Heart left ventricle (tissue), 16 donors: ENCODE measurements at regions of chrX and their contacts with region 1.

Region 1: GRCh38 chrX:70096052-70096451 is 33.8 kb downstream of the OTUD6A start:
- DNase-seq: no peak
- ATAC-seq: no peak
- H3K4me3 ChIP-seq: no peak overlapping the region
- H3K27ac ChIP-seq: no peak overlapping the region
- H3K4me1 ChIP-seq: no peaks in the 10 kb centered on the region
- H3K27me3 ChIP-seq: peaks cover 0 to 4% (median 0%) of the 10 kb centered on the region in 9 donors
- CTCF ChIP-seq: peak in 5 of 12 donors; percentile 10 to 37 (median 13)
- POLR2A ChIP-seq: no peak

Region 2: GRCh38 chrX:68822641-68823410 is 1273.2 kb before region 1 on chrX:
- intact Hi-C with region 1: loop called in 1 of 10 experiments (anchors 5 kb)
- DNase-seq: peak in 4 of 5 donors; percentile 40 to 62 (median 54)
- ATAC-seq: peak; percentile 49 to 90 (median 86)
- H3K4me3 ChIP-seq: no peak overlapping the region
- H3K27ac ChIP-seq: no peak overlapping the region
- H3K4me1 ChIP-seq: peaks cover 0 to 5% (median 0%) of the 10 kb centered on the region in 12 donors
- H3K27me3 ChIP-seq: peaks cover 0 to 25% (median 0%) of the 10 kb centered on the region in 9 donors
- CTCF ChIP-seq: peak; percentile 34 to 70 (median 64)
- POLR2A ChIP-seq: no peak

Region 3: DNA sequence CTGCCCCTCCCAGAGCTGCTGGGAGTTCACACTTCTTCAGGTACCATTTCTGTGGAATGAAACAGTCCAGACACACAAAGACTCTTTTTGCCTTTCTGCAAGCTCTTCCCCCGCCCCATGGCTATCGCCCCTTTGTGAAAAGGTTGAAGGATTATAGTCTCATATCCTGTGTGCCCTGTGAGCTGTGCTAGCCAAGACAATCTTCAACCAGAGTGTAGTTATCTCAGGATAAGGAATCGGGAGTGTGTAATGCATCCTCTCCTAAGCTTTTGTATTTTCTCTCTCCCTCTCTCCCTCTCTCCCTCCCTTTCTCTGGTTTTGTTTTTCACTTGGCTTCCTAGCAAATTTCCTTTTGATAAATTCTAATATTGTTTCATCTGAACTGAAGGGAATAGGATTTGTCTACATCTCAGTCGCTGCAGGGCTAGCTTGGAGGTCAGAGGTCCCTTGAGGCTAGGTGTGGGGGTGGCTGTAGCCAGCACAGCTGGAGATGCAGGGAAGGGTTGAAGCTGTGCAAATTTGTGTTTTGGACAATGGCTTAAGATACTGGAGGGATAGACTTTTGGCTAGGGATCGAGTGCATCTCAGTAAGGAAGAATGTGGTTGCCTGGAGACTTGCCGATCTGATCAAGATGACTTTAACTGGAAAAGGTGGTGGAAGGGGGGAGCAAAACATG is 666.6 kb before region 1 on chrX:
- intact Hi-C with region 1: loop called in 5 of 10 experiments (anchors 5 to 10 kb)
- DNase-seq: peak in 3 of 5 donors; percentile 29 to 37 (median 31)
- ATAC-seq: peak in 3 of 4 donors; percentile 52 to 69 (median 64)
- H3K4me3 ChIP-seq: no peak overlapping the region
- H3K27ac ChIP-seq: peak overlapping the region in 2 of 12 donors; percentile 24 to 37
- H3K4me1 ChIP-seq: no peaks in the 10 kb centered on the region
- H3K27me3 ChIP-seq: peaks cover 0 to 23% (median 0%) of the 10 kb centered on the region in 9 donors
- CTCF ChIP-seq: no peak
- POLR2A ChIP-seq: no peak

Region 4: DNA sequence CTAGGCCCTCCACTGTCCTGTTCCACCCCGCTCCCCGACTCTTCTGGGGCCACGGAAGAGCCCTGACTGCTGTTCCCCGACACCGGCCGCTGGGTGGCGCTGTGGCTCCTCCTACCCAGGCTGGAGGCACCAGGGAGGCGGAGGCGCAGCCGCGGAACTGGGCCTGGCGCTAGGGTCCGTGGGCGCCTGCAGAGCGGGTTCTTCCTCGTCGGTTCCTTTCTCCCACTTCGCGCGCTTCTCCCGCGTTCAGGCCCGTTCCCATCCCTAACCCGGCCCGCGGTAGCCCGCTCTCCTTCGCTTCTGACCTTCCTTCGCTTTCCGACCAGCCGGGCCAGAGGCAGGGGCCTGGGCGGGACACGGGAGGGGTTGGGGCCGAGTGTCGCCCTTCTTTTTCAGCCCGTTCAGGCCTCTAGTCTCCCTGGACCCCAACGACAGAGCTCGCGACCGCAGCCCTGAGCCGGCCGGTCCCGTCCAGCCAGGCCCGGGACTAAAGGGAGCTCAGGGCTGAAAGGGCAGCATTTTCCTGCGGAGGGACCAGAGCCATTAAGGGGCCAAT is 557.7 kb before region 1 on chrX:
- intact Hi-C with region 1: loop called in 9 of 10 experiments (anchors 1 to 10 kb)
- DNase-seq: peak; percentile 66 to 84 (median 75)
- ATAC-seq: peak; percentile 87 to 98 (median 95)
- H3K4me3 ChIP-seq: peak overlapping the region in 11 of 12 donors; percentile 17 to 61 (median 51)
- H3K27ac ChIP-seq: peak overlapping the region in 2 of 12 donors; percentile 38 to 70
- H3K4me1 ChIP-seq: peaks cover 0 to 9% (median 0%) of the 10 kb centered on the region in 12 donors
- H3K27me3 ChIP-seq: peaks cover 0 to 21% (median 0%) of the 10 kb centered on the region in 9 donors
- CTCF ChIP-seq: peak; percentile 64 to 80 (median 73)
- POLR2A ChIP-seq: no peak

Region 5: GRCh38 chrX:69740317-69740716 is 355.7 kb before region 1 on chrX:
- intact Hi-C with region 1: no loop called
- DNase-seq: no peak
- ATAC-seq: no peak
- H3K4me3 ChIP-seq: no peak overlapping the region
- H3K27ac ChIP-seq: no peak overlapping the region
- H3K4me1 ChIP-seq: no peaks in the 10 kb centered on the region
- H3K27me3 ChIP-seq: no peaks in the 10 kb centered on the region
- CTCF ChIP-seq: no peak
- POLR2A ChIP-seq: no peak

Region 6: GRCh38 chrX:70030301-70030767 is 65.7 kb before region 1 on chrX:
- intact Hi-C with region 1: loop called (anchors 1 to 5 kb)
- DNase-seq: peak in 4 of 5 donors; percentile 35 to 45 (median 40)
- ATAC-seq: peak in 3 of 4 donors; percentile 63 to 74 (median 67)
- H3K4me3 ChIP-seq: no peak overlapping the region
- H3K27ac ChIP-seq: no peak overlapping the region
- H3K4me1 ChIP-seq: peaks cover 0 to 22% (median 1%) of the 10 kb centered on the region in 12 donors
- H3K27me3 ChIP-seq: peaks cover 0 to 26% (median 0%) of the 10 kb centered on the region in 9 donors
- CTCF ChIP-seq: peak; percentile 59 to 76 (median 65)
- POLR2A ChIP-seq: no peak

Region 7: DNA sequence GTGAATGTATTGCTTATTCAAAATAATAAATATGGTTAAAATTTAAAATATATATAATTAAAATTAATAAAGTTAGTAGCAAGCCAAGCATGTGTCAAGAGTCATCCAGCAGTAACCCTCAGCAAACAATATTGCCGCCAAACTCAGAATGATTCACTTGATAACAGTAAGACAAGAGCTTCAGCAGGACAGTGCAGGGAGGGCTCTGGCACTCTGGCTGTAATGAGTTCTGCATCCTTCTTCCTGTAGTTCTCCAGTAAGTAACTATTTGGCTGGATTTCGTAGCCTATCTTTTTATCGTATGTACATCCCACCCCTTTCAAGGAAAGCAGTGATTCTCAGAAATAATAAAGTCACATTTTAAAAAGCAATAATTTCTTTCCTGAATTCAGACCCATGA is 16.2 kb before region 1 on chrX:
- intact Hi-C with region 1: no loop called
- DNase-seq: no peak
- ATAC-seq: no peak
- H3K4me3 ChIP-seq: no peak overlapping the region
- H3K27ac ChIP-seq: no peak overlapping the region
- H3K4me1 ChIP-seq: peaks cover 0 to 10% (median 0%) of the 10 kb centered on the region in 12 donors
- H3K27me3 ChIP-seq: peaks cover 0 to 16% (median 0%) of the 10 kb centered on the region in 9 donors
- CTCF ChIP-seq: no peak
- POLR2A ChIP-seq: no peak

Region 8: GRCh38 chrX:70132877-70133302 is 36.8 kb after region 1 on chrX:
- intact Hi-C with region 1: no loop called
- DNase-seq: no peak
- ATAC-seq: peak in 3 of 4 donors; percentile 4 to 12 (median 11)
- H3K4me3 ChIP-seq: peak overlapping the region; percentile 49 to 90 (median 77)
- H3K27ac ChIP-seq: peak overlapping the region in 11 of 12 donors; percentile 55 to 91 (median 80)
- H3K4me1 ChIP-seq: peaks cover 0 to 18% (median 5%) of the 10 kb centered on the region in 12 donors
- H3K27me3 ChIP-seq: no peaks in the 10 kb centered on the region
- CTCF ChIP-seq: no peak
- POLR2A ChIP-seq: no peak